ENCODE measurements at regions of chr7 and their contacts with region 1.

Region 1: DNA sequence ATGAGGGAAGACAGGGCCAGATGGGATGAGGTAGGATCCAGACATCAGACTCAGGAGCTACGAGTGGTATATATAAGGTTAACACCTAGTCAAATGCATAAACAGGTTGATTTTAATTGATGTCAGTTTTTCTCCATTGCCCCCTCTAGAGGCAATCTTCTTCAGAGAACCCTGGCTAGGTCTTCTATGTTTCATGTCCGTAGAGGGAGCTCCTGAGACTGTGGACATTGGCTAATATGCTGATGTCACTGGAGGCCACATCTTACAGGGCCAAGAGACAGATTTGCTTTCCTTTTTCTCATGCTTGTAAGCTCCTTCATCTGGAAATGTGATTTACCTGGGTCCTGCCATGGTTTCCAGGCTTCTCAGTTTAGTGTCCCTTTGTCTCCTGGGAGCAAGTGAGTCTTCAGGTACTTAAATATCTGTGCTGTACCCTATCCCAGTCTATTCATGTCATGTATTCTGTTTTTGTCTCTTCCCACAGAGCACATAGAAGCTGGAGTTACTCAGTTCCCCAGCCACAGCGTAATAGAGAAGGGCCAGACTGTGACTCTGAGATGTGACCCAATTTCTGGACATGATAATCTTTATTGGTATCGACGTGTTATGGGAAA is 161.6 kb upstream of the PRSS1 start:
- DNase-seq: peak; percentile 71
- CTCF ChIP-seq: peak; percentile 72

Region 2: DNA sequence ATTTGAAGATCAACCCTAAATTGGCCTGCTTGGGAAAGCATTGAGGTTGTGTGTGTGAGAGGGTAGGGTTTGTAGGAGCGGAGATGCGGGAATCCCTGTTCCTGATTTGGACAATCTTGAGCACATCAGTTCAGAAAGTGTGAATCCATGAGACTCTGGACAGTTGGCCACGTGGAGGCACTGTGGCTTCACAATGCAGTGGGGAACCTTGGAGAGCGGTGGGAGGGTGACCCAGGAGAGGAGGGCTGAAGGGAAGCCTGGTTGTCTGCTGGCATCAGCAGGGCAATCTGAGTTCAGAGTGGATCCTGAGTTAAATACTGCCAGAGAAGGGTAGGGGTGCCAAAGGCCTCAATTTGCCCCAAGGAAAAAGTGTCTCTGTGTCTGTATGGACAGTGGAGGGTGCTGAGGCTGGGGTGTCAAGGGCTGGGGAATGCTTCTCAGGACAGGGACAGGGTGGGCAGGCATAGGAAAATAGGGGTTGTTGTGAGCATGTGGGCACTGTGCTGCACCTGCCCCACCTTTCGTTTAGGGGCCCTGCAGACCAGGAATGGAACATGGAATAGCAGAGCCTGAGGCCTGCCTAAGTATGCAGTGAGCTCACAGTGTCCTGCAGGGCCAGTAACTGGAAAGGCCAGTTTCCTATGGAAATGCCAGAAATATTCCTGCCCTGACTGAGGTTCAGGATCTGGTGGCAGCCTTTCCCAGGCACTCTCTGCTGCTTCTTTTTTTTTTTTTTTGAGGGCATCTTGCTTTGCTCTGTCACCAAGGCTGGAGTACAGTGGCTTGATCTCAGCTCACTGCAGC is 166.9 kb before region 1 on chr7:
- CTCF ChIA-PET with region 1: no interaction called
- POLR2A ChIA-PET with region 1: no interaction called
- DNase-seq: no peak
- CTCF ChIP-seq: peak; percentile 37

Region 3: GRCh38 chr7:142542942-142543341 is 44.7 kb before region 1 on chr7:
- CTCF ChIA-PET with region 1: interaction called, 56 read pairs
- POLR2A ChIA-PET with region 1: no interaction called
- DNase-seq: no peak
- CTCF ChIP-seq: no peak

Region 4: DNA sequence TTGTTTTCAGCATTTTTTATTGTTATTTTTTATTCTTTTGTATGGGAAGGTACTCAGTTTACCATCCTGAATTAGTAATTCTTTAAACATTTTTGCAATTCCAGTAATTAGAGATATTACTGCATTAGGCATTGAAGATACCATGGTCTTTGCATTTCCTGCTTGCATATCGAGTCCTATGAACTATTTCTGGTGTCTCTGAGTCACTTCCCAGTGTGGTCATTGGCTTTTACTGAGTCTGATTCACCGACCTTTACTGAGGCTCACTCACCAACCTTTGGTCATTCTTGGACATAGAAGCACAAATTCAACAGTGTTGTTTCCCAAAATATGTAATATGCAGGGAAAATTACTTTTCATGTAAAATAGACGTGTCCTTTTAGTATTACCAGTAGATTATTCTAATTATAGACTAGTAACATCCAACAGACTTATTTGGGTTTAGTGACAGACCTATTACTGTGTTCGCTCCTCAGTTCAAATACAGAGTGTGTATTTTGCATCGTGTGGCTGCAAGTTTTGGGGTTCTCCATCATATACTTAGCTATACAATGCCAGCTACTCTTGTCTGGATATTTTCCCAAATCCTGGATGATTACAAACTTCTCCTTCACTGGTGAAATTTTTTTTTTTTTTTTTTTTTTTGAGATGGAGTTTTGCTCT is 19.1 kb before region 1 on chr7:
- CTCF ChIA-PET with region 1: interaction called, 14 read pairs
- POLR2A ChIA-PET with region 1: no interaction called
- DNase-seq: no peak
- CTCF ChIP-seq: no peak

Region 5: GRCh38 chr7:142603870-142604448 is 16.3 kb after region 1 on chr7:
- CTCF ChIA-PET with region 1: interaction called, 88 read pairs
- POLR2A ChIA-PET with region 1: interaction called, 3 read pairs
- DNase-seq: peak; percentile 62
- CTCF ChIP-seq: peak; percentile 81

Region 6: DNA sequence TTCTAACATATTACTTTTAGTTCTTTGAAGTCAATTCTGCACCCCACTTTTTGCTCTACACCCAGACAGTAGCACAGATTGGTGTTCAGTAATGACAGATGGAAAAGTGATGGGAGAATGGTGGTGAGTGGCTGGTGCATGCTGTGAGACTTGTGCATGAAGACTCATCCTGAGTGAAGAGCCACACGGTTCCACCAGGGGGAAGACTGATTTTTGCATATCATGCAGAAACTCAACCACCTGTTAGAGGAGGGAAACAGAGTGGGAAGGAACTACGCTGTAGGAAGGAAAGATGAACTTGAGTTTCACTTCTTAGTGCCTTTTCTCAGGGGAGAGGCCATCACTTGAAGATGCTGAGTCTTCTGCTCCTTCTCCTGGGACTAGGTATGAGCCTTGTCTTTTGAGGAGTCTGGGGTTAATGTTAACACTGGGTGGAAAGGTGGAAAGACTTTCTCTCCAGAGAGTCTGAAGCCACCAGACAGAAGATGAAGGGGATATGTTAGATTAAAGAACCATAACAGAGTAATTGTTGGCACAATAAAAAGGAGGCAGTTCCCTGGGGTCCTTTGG is 152.3 kb after region 1 on chr7:
- CTCF ChIA-PET with region 1: no interaction called
- POLR2A ChIA-PET with region 1: no interaction called
- DNase-seq: no peak
- CTCF ChIP-seq: peak; percentile 12

Measured in GM10248 (cell line).